Activated CD4-positive, alpha-beta memory T cell treated with anti-CD3 and anti-CD28 coated beads for 36 hours (primary cell): ENCODE measurements at regions of chrX and their contacts with region 1.

Region 1: GRCh38 chrX:48715072-48715471 is 18.5 kb downstream of the SUV39H1 start:
- DNase-seq: no peak
- H3K4me3 Mint-ChIP-seq: no peak overlapping the region
- H3K27ac Mint-ChIP-seq: peak overlapping the region; percentile 84
- H3K4me1 Mint-ChIP-seq: peaks cover 79% of the 10 kb centered on the region
- H3K27me3 Mint-ChIP-seq: no peaks in the 10 kb centered on the region

Region 2: GRCh38 chrX:48676106-48676892 is 38.8 kb before region 1 on chrX:
- CTCF ChIA-PET with region 1: no interaction called
- POLR2A ChIA-PET with region 1: no interaction called
- intact Hi-C with region 1: loop called (anchors 1 kb)
- DNase-seq: peak; percentile 93
- H3K4me3 Mint-ChIP-seq: peak overlapping the region; percentile 90
- H3K27ac Mint-ChIP-seq: peak overlapping the region; percentile 93
- H3K4me1 Mint-ChIP-seq: peaks cover 31% of the 10 kb centered on the region
- H3K27me3 Mint-ChIP-seq: no peaks in the 10 kb centered on the region

Region 3: DNA sequence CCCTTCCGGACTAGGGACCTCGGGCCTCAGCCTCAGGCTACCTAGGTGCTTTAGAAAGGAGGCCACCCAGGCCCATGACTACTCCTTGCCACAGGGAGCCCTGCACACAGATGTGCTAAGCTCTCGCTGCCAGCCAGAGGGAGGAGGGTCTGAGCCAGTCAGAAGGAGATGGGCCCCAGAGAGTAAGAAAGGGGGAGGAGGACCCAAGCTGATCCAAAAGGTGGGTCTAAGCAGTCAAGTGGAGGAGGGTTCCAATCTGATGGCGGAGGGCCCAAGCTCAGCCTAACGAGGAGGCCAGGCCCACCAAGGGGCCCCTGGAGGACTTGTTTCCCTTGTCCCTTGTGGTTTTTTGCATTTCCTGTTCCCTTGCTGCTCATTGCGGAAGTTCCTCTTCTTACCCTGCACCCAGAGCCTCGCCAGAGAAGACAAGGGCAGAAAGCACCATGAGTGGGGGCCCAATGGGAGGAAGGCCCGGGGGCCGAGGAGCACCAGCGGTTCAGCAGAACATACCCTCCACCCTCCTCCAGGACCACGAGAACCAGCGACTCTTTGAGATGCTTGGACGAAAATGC is 31.6 kb before region 1 on chrX and contains the start of gene WAS:
- CTCF ChIA-PET with region 1: no interaction called
- POLR2A ChIA-PET with region 1: no interaction called
- intact Hi-C with region 1: loop called (anchors 1 kb)
- DNase-seq: peak; percentile 67
- H3K4me3 Mint-ChIP-seq: peak within 1 kb of the TSS; percentile 92
- H3K27ac Mint-ChIP-seq: peak within 1 kb of the TSS; percentile 97
- H3K4me1 Mint-ChIP-seq: peaks cover 55% of the 10 kb centered on the region
- H3K27me3 Mint-ChIP-seq: no peaks in the 10 kb centered on the region
- total RNA-seq, gene WAS: 95.2 to 99.6 TPM

Region 4: GRCh38 chrX:48696301-48697181 is 18.5 kb before region 1 on chrX and contains the start of gene SUV39H1:
- CTCF ChIA-PET with region 1: no interaction called
- POLR2A ChIA-PET with region 1: interaction called, 3 read pairs
- intact Hi-C with region 1: loop called (anchors 2 kb)
- DNase-seq: peak; percentile 91
- H3K4me3 Mint-ChIP-seq: peak within 1 kb of the TSS; percentile 87
- H3K27ac Mint-ChIP-seq: peak within 1 kb of the TSS; percentile 92
- H3K4me1 Mint-ChIP-seq: peaks cover 26% of the 10 kb centered on the region
- H3K27me3 Mint-ChIP-seq: no peaks in the 10 kb centered on the region
- total RNA-seq, gene SUV39H1: 32.3 to 35.6 TPM

Region 5: GRCh38 chrX:48751343-48751742 is 36.3 kb after region 1 on chrX:
- CTCF ChIA-PET with region 1: no interaction called
- POLR2A ChIA-PET with region 1: no interaction called
- intact Hi-C with region 1: loop called (anchors 1 kb)
- DNase-seq: peak; percentile 38
- H3K4me3 Mint-ChIP-seq: no peak overlapping the region
- H3K27ac Mint-ChIP-seq: no peak overlapping the region
- H3K4me1 Mint-ChIP-seq: peaks cover 11% of the 10 kb centered on the region
- H3K27me3 Mint-ChIP-seq: no peaks in the 10 kb centered on the region